ENCODE measurements at regions of chr10 and their contacts with region 1.

Region 1: DNA sequence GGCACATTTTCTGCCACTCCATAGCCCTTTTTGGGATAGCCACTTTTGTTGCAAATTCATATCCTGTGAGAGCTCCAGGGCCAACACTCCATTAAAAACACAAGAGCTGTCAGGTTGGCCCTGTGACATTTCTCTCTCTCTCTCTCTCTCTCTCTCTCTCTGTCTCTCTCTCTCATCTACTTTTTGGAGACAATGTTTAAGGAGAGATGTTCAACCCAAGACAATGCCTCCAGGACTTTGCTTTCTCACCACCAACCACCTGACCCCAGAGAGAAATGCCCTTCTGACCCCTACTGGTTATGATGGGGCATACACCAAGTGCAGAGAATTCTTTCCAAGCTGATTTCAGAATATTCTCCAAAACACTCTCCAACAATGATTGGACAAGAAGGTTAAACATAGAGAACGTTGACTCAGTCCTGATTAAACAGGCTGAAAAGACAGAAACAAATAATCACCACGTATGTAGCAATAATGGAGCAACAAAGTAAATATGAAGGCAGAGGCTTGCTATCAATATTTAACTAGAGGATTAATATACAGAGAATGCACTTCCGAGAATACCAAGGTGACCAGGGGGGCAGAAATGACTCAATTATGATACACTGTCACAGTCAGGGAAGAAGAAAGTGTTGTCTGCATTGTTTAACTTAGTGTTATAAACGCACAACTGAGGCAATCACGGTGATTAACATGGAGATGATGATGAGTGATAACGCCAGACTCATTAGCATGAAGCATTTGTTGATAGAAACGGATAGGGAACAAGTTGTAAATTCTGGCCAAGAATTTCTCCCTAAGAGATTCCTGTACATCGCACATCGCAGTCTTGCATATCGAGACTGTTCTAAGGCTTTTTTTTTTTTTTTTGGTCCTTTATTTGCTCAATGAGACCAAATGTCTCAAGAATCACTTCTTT is 178.5 kb downstream of the NRP1 start:
- DNase-seq: peak; percentile 79
- H3K4me3 ChIP-seq: no peak overlapping the region
- H3K27ac ChIP-seq: no peak overlapping the region
- H3K4me1 ChIP-seq: peaks cover 48% of the 10 kb centered on the region
- CTCF ChIP-seq: peak; percentile 96

Region 2: DNA sequence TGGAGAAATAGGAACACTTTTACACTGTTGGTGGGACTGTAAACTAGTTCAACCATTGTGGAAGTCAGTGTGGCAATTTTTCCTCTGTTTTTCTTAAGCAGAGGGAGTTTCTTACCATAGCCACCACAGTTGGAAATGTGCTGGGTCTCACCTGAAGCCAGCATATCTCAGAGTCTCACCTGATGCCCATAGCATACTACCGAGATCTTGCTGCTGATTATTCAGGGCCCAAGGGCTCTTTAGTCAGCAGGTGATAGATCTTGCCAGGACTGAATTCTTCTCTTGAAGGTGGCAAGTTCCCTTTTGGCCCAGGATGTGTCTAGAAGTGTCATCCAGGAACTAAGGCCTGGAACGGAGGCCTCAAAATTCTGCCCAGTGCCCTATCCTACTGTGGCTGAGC is 494.6 kb before region 1 on chr10:
- CTCF ChIA-PET with region 1: no interaction called
- POLR2A ChIA-PET with region 1: no interaction called
- intact Hi-C with region 1: no loop called
- DNase-seq: no peak
- H3K4me3 ChIP-seq: no peak overlapping the region
- H3K27ac ChIP-seq: no peak overlapping the region
- H3K4me1 ChIP-seq: no peaks in the 10 kb centered on the region
- CTCF ChIP-seq: no peak

Region 3: GRCh38 chr10:32795598-32796183 is 360.3 kb before region 1 on chr10:
- CTCF ChIA-PET with region 1: no interaction called
- POLR2A ChIA-PET with region 1: no interaction called
- intact Hi-C with region 1: loop called (anchors 1 kb)
- DNase-seq: peak; percentile 60
- H3K4me3 ChIP-seq: no peak overlapping the region
- H3K27ac ChIP-seq: no peak overlapping the region
- H3K4me1 ChIP-seq: no peaks in the 10 kb centered on the region
- CTCF ChIP-seq: peak; percentile 98

Region 4: DNA sequence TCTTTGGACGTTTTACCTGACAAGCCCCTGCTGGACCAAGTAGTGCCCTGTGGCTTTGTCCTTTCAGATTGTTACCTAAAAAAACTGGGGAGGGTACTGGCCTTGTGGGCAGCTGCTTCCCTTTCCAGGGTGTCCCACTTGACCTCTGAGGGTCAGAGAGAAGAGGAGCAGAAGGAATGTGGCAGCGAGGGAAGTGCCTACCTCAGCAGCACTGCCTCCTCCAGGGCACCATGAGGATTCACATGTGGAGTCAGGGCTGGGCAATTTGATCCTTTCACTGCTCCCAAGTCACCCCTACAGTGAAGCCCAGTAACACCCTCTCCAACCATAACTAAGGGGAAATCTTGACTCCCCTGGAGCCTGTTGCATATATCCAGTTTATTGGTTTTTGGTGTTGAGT is 262.5 kb before region 1 on chr10:
- CTCF ChIA-PET with region 1: no interaction called
- POLR2A ChIA-PET with region 1: no interaction called
- intact Hi-C with region 1: loop called (anchors 10 kb)
- DNase-seq: no peak
- H3K4me3 ChIP-seq: no peak overlapping the region
- H3K27ac ChIP-seq: no peak overlapping the region
- H3K4me1 ChIP-seq: no peaks in the 10 kb centered on the region
- CTCF ChIP-seq: 0 out of 2 replicates have a peak, but pooled peaks have one; percentile 7

Region 5: DNA sequence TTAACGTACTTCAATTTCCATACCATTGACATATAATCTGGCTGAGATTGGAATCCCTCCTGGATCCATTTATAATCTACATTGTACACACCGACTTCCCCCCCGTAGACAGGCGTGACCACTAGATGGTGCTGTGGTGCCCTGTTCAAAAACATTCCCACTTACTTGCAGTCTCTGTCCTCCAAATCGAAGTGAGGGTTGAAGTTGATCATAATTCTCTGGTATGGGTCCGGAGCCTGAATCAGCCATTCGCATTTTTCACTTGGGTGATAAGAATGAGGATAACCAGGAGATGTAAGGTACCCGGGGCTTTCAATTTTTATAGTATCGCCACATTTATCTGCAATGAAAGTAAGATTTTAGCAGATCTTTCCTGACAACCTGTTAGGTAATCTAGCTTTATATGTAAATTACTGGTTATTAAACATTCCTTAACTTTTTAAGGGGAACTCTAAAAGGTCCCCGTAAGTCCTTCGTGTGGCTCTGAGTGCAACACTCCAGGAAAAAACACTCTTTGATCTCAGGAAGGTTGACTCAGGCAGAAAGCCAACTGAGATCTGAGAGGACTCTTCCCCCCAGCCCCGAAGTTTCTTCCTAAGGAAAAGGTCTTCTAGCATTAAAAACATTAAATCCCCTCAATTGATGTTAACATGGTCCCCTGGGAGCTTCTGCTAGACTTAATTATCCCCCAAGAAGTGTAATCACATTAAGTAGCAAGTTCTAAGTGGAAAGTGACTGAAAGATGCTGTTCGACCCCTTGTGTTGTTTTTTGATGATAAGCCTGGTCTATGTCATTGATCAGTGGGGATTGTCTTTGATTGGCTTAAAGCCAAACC is 174.8 kb after region 1 on chr10:
- CTCF ChIA-PET with region 1: no interaction called
- POLR2A ChIA-PET with region 1: no interaction called
- intact Hi-C with region 1: no loop called
- DNase-seq: peak; percentile 67
- H3K4me3 ChIP-seq: no peak overlapping the region
- H3K27ac ChIP-seq: no peak overlapping the region
- H3K4me1 ChIP-seq: no peaks in the 10 kb centered on the region
- CTCF ChIP-seq: peak; percentile 99

Measured in OCI-LY7 (cell line).